Aorta (tissue), 5 donors: ENCODE measurements at regions of chr1 and their contacts with region 1.

Region 1: GRCh38 chr1:21963477-21964217 is 13.2 kb upstream of the CELA3B start:
- DNase-seq: peak; percentile 79 to 93
- ATAC-seq: peak; percentile 88
- H3K4me3 ChIP-seq: no peak overlapping the region
- H3K27ac ChIP-seq: no peak overlapping the region
- H3K4me1 ChIP-seq: no peaks in the 10 kb centered on the region
- H3K27me3 ChIP-seq: no peaks in the 10 kb centered on the region

Region 2: GRCh38 chr1:21782868-21783678 is 180.6 kb before region 1 on chr1 and contains the start of gene USP48:
- intact Hi-C with region 1: loop called in 1 of 2 experiments (anchors 2 kb)
- DNase-seq: peak; percentile 98 to 99
- ATAC-seq: peak; percentile 99
- H3K4me3 ChIP-seq: peak within 1 kb of the TSS; percentile 55 to 98
- H3K27ac ChIP-seq: peak within 1 kb of the TSS; percentile 94 to 96
- H3K4me1 ChIP-seq: no peaks in the 10 kb centered on the region
- H3K27me3 ChIP-seq: no peaks in the 10 kb centered on the region
- total RNA-seq, gene USP48: 52.4 to 90.1 TPM

Region 3: DNA sequence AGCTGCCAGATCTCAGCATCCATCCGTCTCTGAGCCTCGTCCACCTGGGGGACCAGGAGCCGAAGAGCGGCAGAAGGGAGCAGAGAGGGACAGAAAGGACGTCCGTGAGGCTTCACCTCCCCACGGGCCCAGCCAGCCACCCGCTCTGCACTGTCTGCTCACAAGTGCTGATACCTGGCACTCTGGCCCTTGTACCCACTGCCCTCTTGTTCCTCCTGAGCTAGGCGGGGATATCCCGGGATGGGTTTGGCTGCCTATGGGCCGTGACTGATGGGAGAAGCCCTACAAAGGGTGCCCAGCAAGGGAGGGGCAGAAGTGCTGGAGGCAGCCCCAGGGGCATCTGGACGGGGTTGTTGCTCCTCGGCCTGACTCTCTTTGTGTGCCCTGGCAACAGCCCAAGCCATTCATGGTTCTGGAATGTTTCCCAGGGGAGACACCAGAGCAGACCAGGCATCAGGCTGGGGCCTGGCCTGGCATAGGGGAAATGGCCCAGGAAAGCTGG is 94.0 kb before region 1 on chr1:
- intact Hi-C with region 1: loop called in 1 of 2 experiments (anchors 2 kb)
- DNase-seq: peak; percentile 89 to 95
- ATAC-seq: peak; percentile 66
- H3K4me3 ChIP-seq: no peak overlapping the region
- H3K27ac ChIP-seq: peak overlapping the region in 1 of 2 donors; percentile 26
- H3K4me1 ChIP-seq: no peaks in the 10 kb centered on the region
- H3K27me3 ChIP-seq: no peaks in the 10 kb centered on the region

Region 4: GRCh38 chr1:21896652-21897532 is 66.8 kb before region 1 on chr1:
- intact Hi-C with region 1: loop called in 1 of 2 experiments (anchors 5 kb)
- DNase-seq: peak; percentile 82 to 88
- ATAC-seq: peak; percentile 62
- H3K4me3 ChIP-seq: no peak overlapping the region
- H3K27ac ChIP-seq: peak overlapping the region; percentile 48 to 53
- H3K4me1 ChIP-seq: peaks cover 0 to 2% of the 10 kb centered on the region in 2 donors
- H3K27me3 ChIP-seq: no peaks in the 10 kb centered on the region

Region 5: GRCh38 chr1:22048351-22049192 is 84.9 kb after region 1 on chr1:
- intact Hi-C with region 1: no loop called
- DNase-seq: no peak
- ATAC-seq: no peak
- H3K4me3 ChIP-seq: no peak overlapping the region
- H3K27ac ChIP-seq: no peak overlapping the region
- H3K4me1 ChIP-seq: no peaks in the 10 kb centered on the region
- H3K27me3 ChIP-seq: no peaks in the 10 kb centered on the region